AG04450 (cell line): ENCODE measurements at regions of chr16 and their contacts with region 1.

Region 1: GRCh38 chr16:74431516-74431915 is 10.2 kb upstream of the CLEC18B start:
- DNase-seq: no peak
- H3K4me3 ChIP-seq: no peak overlapping the region
- H3K27ac ChIP-seq: no peak overlapping the region
- H3K27me3 ChIP-seq: no peaks in the 10 kb centered on the region
- CTCF ChIP-seq: no peak

Region 2: GRCh38 chr16:74309789-74310781 is 121.4 kb before region 1 on chr16:
- CTCF ChIA-PET with region 1: interaction called, 11 read pairs
- POLR2A ChIA-PET with region 1: no interaction called
- DNase-seq: peak; percentile 23
- H3K4me3 ChIP-seq: no peak overlapping the region
- H3K27ac ChIP-seq: no peak overlapping the region
- H3K27me3 ChIP-seq: no peaks in the 10 kb centered on the region
- CTCF ChIP-seq: peak; percentile 81